Mammary epithelial cell (primary cell): ENCODE measurements at regions of chr6 and their contacts with region 1.

Region 1: GRCh38 chr6:25263657-25264056 is 15.5 kb upstream of the CARMIL1 start:
- DNase-seq: peak; percentile 68
- H3K4me3 ChIP-seq: no peak overlapping the region
- H3K27ac ChIP-seq: no peak overlapping the region
- H3K4me1 ChIP-seq: no peaks in the 10 kb centered on the region
- H3K27me3 ChIP-seq: no peaks in the 10 kb centered on the region
- CTCF ChIP-seq: no peak

Region 2: GRCh38 chr6:24919004-24919892 is 344.4 kb before region 1 on chr6:
- CTCF ChIA-PET with region 1: no interaction called
- dilution Hi-C with region 1: no loop called
- in situ Hi-C with region 1: no loop called
- intact Hi-C with region 1: no loop called
- DNase-seq: no peak
- H3K4me3 ChIP-seq: no peak overlapping the region
- H3K27ac ChIP-seq: no peak overlapping the region
- H3K4me1 ChIP-seq: no peaks in the 10 kb centered on the region
- H3K27me3 ChIP-seq: no peaks in the 10 kb centered on the region
- CTCF ChIP-seq: no peak

Region 3: GRCh38 chr6:25088513-25088912 is 175.1 kb before region 1 on chr6:
- CTCF ChIA-PET with region 1: no interaction called
- dilution Hi-C with region 1: no loop called
- in situ Hi-C with region 1: no loop called
- intact Hi-C with region 1: no loop called
- DNase-seq: no peak
- H3K4me3 ChIP-seq: no peak overlapping the region
- H3K27ac ChIP-seq: no peak overlapping the region
- H3K4me1 ChIP-seq: peaks cover 16% of the 10 kb centered on the region
- H3K27me3 ChIP-seq: no peaks in the 10 kb centered on the region
- CTCF ChIP-seq: no peak

Region 4: GRCh38 chr6:25556516-25556915 is 292.9 kb after region 1 on chr6:
- CTCF ChIA-PET with region 1: interaction called, 6 read pairs
- dilution Hi-C with region 1: no loop called
- in situ Hi-C with region 1: no loop called
- intact Hi-C with region 1: loop called (anchors 1 kb)
- DNase-seq: peak; percentile 35
- H3K4me3 ChIP-seq: no peak overlapping the region
- H3K27ac ChIP-seq: no peak overlapping the region
- H3K4me1 ChIP-seq: no peaks in the 10 kb centered on the region
- H3K27me3 ChIP-seq: no peaks in the 10 kb centered on the region
- CTCF ChIP-seq: peak; percentile 87

Region 5: DNA sequence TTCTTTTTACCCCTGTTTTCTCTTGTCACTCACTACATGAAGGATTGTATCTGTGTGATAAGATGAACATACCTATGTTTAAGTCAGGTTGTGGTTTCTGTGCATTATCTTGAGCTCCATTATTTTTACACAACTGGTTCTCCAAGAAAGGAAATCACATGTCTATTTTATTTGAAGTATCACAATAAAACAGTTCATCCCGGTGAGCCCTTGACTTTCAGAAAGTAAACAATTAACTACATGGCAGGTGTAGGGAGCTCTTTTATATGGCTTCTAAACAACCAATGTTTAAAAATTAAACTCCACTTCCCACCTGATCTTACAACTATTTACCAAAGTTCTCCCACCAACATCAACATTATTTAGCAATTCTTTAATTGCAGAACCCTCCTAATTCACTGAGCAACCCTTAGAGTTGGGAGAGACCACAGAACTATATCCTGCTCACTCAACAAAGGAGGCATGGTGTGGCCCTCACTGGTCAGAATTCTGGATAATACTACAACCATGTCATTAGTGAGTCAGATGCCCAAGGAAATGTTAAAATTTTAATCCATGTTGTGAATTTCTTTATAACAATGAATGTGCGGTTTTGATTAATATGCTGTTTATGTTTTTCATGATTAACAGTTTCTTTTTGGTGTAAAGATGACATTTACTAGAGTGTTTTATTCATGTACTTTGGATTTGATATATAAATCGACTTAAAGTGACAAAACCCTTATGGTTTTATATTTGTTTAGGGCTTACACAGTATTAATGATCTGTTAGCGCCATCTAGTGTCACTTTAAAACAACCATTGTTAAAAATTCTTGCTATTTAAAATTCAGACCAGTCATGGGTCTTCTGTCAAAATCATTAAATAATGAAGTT is 338.4 kb after region 1 on chr6:
- CTCF ChIA-PET with region 1: no interaction called
- dilution Hi-C with region 1: no loop called
- in situ Hi-C with region 1: no loop called
- intact Hi-C with region 1: loop called (anchors 2 kb)
- DNase-seq: peak; percentile 12
- H3K4me3 ChIP-seq: no peak overlapping the region
- H3K27ac ChIP-seq: no peak overlapping the region
- H3K4me1 ChIP-seq: no peaks in the 10 kb centered on the region
- H3K27me3 ChIP-seq: no peaks in the 10 kb centered on the region
- CTCF ChIP-seq: peak; percentile 44 to 50